ENCODE measurements at regions of chr20 and their contacts with region 1.

Region 1: DNA sequence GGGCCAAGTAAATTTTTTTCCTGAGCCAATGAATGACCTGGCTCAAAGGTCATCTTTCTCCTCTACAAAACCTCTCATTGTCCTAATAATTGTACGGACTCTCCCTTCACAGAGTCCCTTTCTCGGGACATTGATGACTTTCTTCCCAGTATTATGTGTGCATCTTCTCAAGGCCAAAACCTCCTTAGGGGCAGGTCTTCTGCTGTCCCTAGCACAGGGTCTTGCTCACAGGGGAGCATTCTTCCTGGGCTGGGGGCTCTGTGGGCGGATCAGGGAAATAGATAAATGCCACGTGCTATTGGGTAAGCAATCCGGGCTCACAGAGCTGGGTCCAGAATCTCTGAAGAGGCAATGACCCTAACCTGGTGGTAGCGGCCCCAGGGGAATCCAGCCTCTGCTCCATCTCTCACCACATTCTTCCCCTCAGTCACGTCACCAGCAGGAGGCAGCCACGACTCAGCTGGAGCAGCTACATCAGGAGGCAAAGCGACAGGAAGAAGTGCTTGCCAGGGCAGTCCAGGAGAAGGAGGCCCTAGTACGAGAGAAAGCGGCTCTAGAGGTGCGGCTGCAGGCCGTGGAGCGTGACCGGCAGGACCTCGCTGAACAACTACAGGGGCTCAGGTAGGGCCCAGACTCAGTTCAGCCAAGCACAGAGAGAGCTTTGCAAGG is 23.5 kb downstream of the CEP250 start:
- DNase-seq: no peak
- CTCF ChIP-seq: peak; percentile 22

Region 2: DNA sequence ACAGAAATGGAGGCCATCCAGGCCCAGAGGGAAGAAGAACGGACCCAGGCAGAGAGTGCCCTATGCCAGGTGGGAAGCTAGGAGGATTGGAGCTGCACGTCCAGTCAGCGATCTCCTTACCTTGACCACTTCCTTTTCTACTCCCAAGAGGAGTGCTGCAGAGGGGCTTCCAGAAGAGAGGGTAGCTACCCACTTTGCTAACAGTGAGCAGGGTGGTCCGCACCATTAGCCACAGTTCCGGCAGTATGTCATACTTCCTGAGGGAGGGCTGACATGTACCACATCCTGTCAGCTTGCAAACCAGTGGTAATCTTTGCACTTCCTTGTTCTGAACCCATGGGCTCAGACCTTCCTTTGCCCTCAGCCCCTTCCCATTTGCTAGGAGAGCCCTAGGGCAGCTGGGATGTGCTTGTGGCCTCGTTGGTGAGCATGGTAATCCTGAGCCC is 11.8 kb after region 1 on chr20:
- CTCF ChIA-PET with region 1: interaction called, 15 read pairs
- POLR2A ChIA-PET with region 1: interaction called, 4 read pairs
- DNase-seq: peak; percentile 83
- CTCF ChIP-seq: no peak

Measured in GM10248 (cell line).